Activated CD4-positive, alpha-beta T cell treated with anti-CD3 and anti-CD28 coated beads for 36 hours (primary cell): ENCODE measurements at regions of chr17 and their contacts with region 1.

Region 1: GRCh38 chr17:82051776-82052637 is at the starts of genes GPS1 and RFNG:
- DNase-seq: peak; percentile 90
- ATAC-seq: peak; percentile 91
- H3K4me3 Mint-ChIP-seq: peak within 1 kb of the TSS; percentile 82
- H3K27ac Mint-ChIP-seq: peak within 1 kb of the TSS; percentile 73
- H3K4me1 Mint-ChIP-seq: peaks cover 21% of the 10 kb centered on the region
- H3K27me3 Mint-ChIP-seq: no peaks in the 10 kb centered on the region
- total RNA-seq, gene GPS1: 69.0 to 73.5 TPM
- total RNA-seq, gene RFNG: 16.9 to 17.5 TPM

Region 2: GRCh38 chr17:82065638-82066303 is 13.8 kb after region 1 on chr17 and contains the start of gene DUS1L:
- CTCF ChIA-PET with region 1: no interaction called
- POLR2A ChIA-PET with region 1: no interaction called
- intact Hi-C with region 1: loop called (anchors 1 to 2 kb)
- DNase-seq: peak; percentile 83
- ATAC-seq: peak; percentile 93
- H3K4me3 Mint-ChIP-seq: peak within 1 kb of the TSS; percentile 84
- H3K27ac Mint-ChIP-seq: peak within 1 kb of the TSS; percentile 91
- H3K4me1 Mint-ChIP-seq: peaks cover 14% of the 10 kb centered on the region
- H3K27me3 Mint-ChIP-seq: no peaks in the 10 kb centered on the region
- total RNA-seq, gene DUS1L: 119 to 124 TPM

Region 3: DNA sequence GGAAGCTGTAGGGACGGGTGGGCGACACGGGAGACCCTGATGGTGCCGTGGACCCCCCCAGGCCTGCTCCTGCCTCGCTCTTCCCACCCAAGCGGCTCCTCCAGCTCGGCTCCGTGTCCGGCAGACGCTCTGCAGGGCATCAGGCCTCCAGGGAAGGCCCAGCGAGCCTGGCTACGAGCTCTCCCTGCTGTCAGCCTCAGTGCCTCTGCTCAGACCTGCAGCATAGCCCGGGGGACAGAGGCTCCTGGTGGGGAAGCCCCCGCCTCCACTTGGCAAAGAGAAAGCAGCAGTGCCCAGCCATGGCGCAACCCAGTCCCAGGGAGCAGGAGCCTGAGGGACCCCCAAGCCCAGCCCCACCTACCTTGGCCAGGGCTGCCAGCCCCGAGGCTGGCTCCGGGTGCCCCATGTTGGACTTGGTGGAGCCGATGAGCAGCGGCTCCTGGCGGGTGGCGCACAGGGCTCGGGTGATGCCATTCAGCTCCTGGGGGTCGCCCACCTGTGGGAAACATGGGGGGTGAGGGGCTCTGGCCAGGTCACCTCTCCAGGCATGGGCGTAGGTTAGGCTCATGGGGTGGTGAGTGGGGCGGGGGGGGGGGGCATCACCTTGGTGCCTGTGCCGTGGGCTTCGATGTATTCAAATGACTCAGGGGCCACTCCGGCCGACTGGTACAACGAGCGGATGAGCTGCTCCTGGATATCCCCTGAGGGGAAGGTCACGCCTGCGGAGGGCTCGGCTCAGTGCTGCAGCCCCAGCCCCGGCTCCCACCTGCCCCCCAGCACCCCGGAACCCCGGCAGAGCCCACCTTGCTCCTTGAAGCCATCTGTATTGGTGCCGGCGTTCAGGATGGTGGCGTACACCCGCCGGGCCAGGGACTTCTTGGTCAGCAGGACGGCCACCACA is 40.3 kb after region 1 on chr17:
- CTCF ChIA-PET with region 1: no interaction called
- POLR2A ChIA-PET with region 1: no interaction called
- intact Hi-C with region 1: no loop called
- DNase-seq: no peak
- ATAC-seq: no peak
- H3K4me3 Mint-ChIP-seq: no peak overlapping the region
- H3K27ac Mint-ChIP-seq: no peak overlapping the region
- H3K4me1 Mint-ChIP-seq: peaks cover 3% of the 10 kb centered on the region
- H3K27me3 Mint-ChIP-seq: no peaks in the 10 kb centered on the region